ENCODE measurements at regions of chr17 and their contacts with region 1.

Region 1: DNA sequence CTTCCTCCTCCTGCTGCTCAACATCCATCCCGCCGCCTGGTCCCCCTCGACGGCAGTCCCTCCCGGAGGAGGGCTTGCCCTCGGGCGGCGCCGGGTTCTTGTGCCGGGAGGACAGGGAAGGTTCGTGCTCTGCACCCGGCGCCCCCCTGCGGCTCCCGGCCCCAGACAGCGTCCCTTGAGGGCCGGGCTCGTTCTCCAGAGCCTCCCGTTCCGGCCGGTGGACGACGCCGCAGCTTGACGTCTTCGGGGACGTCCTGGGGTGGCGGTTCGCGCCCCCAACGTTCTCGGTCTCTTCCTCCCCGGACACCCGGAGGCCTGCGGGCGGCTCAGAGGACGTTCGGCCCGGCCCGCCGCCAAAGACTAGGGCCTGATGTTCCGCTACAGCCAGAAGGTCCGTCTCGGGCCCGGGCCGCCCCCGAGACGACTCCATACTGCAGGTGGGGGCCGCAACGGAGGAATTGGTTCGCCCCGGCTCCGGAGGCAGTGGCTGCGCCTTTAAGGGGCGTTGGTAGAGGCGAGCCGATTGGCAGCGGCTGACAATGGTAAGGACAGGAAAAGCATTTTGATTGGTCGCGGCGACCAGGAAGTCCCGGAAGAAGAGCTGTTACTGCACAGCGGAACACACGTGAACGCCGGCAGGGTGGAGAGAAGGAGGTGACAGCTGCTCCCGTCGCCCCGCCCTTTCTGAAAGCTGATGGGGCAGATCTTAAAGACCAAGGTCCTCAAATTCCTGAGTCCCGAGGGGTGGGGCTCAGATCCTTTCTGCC is at the start of gene BORCS6:
- DNase-seq: peak; percentile 86
- H3K4me3 ChIP-seq: peak within 1 kb of the TSS; percentile 79 to 86
- H3K27ac ChIP-seq: peak within 1 kb of the TSS; percentile 79 to 80
- H3K4me1 ChIP-seq: peaks cover 9 to 33% of the 10 kb centered on the region in 2 experiments; a peak in 3 of 4 replicates
- H3K27me3 ChIP-seq: no peaks in the 10 kb centered on the region
- CTCF ChIP-seq: peak; percentile 23
- EP300 ChIP-seq: no peak
- RAD21 ChIP-seq: no peak
- polyA plus RNA-seq, gene BORCS6: 3.7 and 4.3 TPM in 2 replicates

Region 2: GRCh38 chr17:8138672-8139371 is 51.1 kb before region 1 on chr17:
- CTCF ChIA-PET with region 1: interaction called, 15 read pairs
- POLR2A ChIA-PET with region 1: no interaction called
- DNase-seq: peak; percentile 94
- H3K4me3 ChIP-seq: peak overlapping the region; percentile 57 to 62
- H3K27ac ChIP-seq: peak overlapping the region; percentile 77 to 78
- H3K4me1 ChIP-seq: peaks cover 0 to 5% of the 10 kb centered on the region in 2 experiments; a peak in 1 of 4 replicates
- H3K27me3 ChIP-seq: no peaks in the 10 kb centered on the region
- CTCF ChIP-seq: peak; percentile 91
- EP300 ChIP-seq: peak in 1 of 2 experiments; percentile 24; a peak in 1 of 4 replicates
- RAD21 ChIP-seq: peak; percentile 78

Region 3: GRCh38 chr17:8173056-8173870 is 16.6 kb before region 1 on chr17:
- CTCF ChIA-PET with region 1: interaction called, 7 read pairs
- POLR2A ChIA-PET with region 1: interaction called, 33 read pairs
- DNase-seq: peak; percentile 77
- H3K4me3 ChIP-seq: peak overlapping the region; percentile 38 to 54
- H3K27ac ChIP-seq: peak overlapping the region; percentile 97 to 98
- H3K4me1 ChIP-seq: peaks cover 6 to 28% of the 10 kb centered on the region in 2 experiments; a peak in 2 of 4 replicates
- H3K27me3 ChIP-seq: no peaks in the 10 kb centered on the region
- CTCF ChIP-seq: no peak
- EP300 ChIP-seq: peak; percentile 57 to 58
- RAD21 ChIP-seq: no peak

Region 4: GRCh38 chr17:8204761-8205555 is 15.1 kb after region 1 on chr17:
- CTCF ChIA-PET with region 1: interaction called, 10 read pairs
- POLR2A ChIA-PET with region 1: interaction called, 22 read pairs
- DNase-seq: no peak
- H3K4me3 ChIP-seq: no peak overlapping the region
- H3K27ac ChIP-seq: no peak overlapping the region
- H3K4me1 ChIP-seq: peaks cover 0 to 6% of the 10 kb centered on the region in 2 experiments; a peak in 1 of 4 replicates
- H3K27me3 ChIP-seq: no peaks in the 10 kb centered on the region
- CTCF ChIP-seq: no peak
- EP300 ChIP-seq: no peak
- RAD21 ChIP-seq: no peak

Region 5: DNA sequence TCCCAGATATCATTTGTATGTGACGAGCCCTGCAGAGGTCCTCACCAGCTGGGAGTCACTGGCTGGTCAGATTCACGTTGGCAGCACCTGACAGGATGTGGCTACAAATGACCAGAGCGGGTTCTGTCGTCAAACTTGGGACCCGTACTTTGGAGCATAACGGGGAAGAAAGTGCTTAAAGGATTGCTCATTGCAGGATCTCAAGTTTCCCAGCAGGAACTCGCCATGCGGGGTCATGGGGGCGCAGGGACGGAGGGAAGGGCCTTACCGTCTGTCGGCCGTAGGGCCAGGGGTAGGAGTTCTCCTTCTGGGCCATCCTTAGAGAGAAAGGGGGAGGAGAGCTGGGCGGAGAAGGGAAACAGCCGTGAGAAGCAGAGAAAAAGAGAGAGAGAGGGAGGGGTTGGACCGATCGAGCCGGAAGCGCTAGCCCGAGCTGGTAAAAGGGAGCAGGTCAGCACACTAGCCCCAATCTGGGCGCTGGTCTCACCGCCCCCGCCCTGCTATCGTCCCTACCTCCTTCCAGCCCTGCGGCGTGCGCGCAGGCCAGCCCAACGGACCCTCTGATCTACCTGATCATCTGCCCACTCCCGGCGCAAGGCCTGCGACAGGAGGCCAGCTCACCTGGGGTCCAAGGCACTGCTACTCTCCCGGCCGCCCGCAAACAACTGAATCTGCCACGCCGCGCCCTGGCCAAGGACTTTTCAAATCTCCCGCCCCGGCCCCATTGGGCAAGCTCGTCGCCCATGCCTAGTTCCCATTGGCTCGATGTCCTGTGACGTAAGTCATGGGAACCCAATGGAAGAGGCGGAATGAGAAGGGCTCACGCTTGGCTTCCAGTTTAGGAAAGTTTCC is 20.2 kb after region 1 on chr17 and contains the start of gene AURKB:
- CTCF ChIA-PET with region 1: interaction called, 6 read pairs
- POLR2A ChIA-PET with region 1: interaction called, 22 read pairs
- DNase-seq: peak; percentile 94
- H3K4me3 ChIP-seq: peak within 1 kb of the TSS; percentile 61 to 85
- H3K27ac ChIP-seq: peak within 1 kb of the TSS; percentile 54 to 84
- H3K4me1 ChIP-seq: peaks cover 0 to 9% of the 10 kb centered on the region in 2 experiments; a peak in 1 of 4 replicates
- H3K27me3 ChIP-seq: no peaks in the 10 kb centered on the region
- CTCF ChIP-seq: no peak
- EP300 ChIP-seq: no peak
- RAD21 ChIP-seq: no peak
- polyA plus RNA-seq, gene AURKB: 28.8 and 43.9 TPM in 2 replicates

Region 6: DNA sequence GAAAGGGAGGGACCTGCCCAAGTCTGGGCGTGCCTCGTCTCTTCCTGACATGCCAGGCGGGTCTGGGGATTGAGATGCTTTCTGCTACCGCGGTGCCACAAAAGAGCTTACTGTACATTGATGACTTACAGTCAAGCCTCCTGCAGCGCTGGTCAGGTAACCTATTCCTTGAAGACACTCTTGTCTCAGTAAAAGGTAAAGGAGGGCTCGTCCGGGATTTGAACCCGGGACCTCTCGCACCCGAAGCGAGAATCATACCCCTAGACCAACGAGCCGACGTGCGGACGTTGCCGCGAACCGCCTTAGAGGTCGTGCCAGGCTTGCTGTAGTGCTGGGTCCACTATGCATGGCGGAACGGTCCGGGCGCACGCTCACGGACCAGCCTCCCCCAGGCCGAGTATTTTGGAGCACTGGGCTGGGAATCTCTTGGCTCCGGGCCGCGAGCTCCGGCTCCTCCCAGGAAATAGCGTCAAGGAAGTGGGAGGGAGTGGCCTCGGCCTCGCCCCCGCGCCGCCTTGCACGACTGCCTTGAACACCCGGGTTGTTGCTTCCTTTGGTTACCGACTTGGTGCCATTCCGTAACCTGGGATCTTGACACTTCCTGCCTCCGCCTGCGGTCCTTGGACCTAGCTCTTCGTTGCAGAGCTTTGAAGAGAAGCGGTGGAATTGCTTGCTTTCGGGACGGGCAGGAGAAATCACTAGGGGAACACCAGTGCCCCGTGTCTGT is 32.9 kb after region 1 on chr17:
- CTCF ChIA-PET with region 1: interaction called, 55 read pairs
- POLR2A ChIA-PET with region 1: interaction called, 14 read pairs
- DNase-seq: peak; percentile 76
- H3K4me3 ChIP-seq: peak overlapping the region; percentile 83 to 86
- H3K27ac ChIP-seq: peak overlapping the region; percentile 92 to 95
- H3K4me1 ChIP-seq: peaks cover 8 to 22% of the 10 kb centered on the region in 2 experiments; a peak in 3 of 4 replicates
- H3K27me3 ChIP-seq: no peaks in the 10 kb centered on the region
- CTCF ChIP-seq: no peak
- EP300 ChIP-seq: no peak
- RAD21 ChIP-seq: no peak